ENCODE measurements at regions of chr10 and their contacts with region 1.

Region 1: DNA sequence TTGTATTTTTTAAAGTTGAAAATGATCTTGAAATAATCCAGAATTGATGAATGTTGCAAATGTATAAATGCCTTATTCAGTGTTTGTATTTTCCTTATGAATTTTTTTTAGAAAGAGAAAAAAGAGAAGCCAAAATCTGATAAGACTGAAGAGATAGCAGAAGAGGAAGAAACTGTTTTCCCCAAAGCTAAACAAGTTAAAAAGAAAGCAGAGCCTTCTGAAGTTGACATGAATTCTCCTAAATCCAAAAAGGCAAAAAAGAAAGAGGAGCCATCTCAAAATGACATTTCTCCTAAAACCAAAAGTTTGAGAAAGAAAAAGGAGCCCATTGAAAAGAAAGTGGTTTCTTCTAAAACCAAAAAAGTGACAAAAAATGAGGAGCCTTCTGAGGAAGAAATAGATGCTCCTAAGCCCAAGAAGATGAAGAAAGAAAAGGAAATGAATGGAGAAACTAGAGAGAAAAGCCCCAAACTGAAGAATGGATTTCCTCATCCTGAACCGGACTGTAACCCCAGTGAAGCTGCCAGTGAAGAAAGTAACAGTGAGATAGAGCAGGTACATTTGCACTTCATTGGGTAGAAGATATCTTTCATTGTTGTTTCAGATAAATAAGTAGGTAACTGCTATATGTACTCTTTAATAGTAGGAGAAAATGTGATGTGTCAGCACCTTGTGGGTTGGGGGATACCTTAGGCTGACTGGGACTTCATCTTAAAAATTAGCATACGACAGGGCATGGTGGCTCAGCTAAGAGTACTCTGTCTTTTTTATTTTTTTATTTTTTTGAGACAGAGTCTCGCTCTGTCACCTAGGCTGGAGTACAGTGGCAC is 3.9 kb downstream of the DDX21 start:
- DNase-seq: no peak
- ATAC-seq: no peak
- H3K4me3 ChIP-seq: no peak overlapping the region
- H3K27ac ChIP-seq: no peak overlapping the region
- H3K4me1 ChIP-seq: peaks cover 26% of the 10 kb centered on the region
- CTCF ChIP-seq: no peak
- EP300 ChIP-seq: no peak
- POLR2A ChIP-seq: no peak
- RAD21 ChIP-seq: no peak

Region 2: GRCh38 chr10:68973975-68974374 is 14.1 kb after region 1 on chr10:
- CTCF ChIA-PET with region 1: interaction called, 10 read pairs
- POLR2A ChIA-PET with region 1: interaction called, 8 read pairs
- DNase-seq: no peak
- ATAC-seq: no peak
- H3K4me3 ChIP-seq: no peak overlapping the region
- H3K27ac ChIP-seq: no peak overlapping the region
- H3K4me1 ChIP-seq: no peaks in the 10 kb centered on the region
- CTCF ChIP-seq: no peak
- EP300 ChIP-seq: no peak
- POLR2A ChIP-seq: no peak
- RAD21 ChIP-seq: no peak

Measured in A549 (cell line).